ENCODE measurements at regions of chr12 and their contacts with region 1.

Region 1: GRCh38 chr12:57583008-57583831 is 7.8 kb upstream of the PIP4K2C start:
- DNase-seq: peak; percentile 79
- H3K4me3 Mint-ChIP-seq: no peak overlapping the region
- H3K27ac Mint-ChIP-seq: no peak overlapping the region
- H3K4me1 Mint-ChIP-seq: no peaks in the 10 kb centered on the region
- H3K27me3 Mint-ChIP-seq: no peaks in the 10 kb centered on the region
- CTCF ChIP-seq: peak; percentile 82

Region 2: DNA sequence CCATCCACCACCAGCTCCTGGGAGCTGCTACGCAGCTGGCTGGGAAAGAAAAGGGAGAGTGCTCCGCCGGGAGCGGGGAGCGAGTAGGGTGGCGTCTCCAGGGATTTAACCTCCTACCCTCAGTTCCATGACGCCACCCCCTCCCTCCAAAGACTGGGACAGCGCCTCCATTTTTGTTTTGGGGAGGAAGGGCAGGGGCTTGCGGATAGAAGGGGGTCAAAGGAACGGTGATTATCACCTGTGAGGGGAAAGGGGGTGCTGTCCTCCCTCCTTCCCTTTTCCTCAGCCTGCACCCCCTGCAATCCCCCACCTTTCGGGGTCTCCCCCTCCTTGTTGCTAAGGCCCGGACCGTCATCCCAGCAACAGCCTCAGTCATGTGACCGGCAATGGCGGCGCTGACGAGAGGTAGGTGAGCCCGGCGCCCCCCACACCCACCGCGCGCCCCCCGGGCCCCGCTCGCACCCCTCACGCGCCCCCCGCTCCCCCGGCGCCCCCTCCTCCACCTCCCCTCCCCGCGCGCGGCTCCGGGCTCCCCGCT is 21.3 kb after region 1 on chr12 and contains the start of gene DTX3:
- CTCF ChIA-PET with region 1: interaction called, 30 read pairs
- POLR2A ChIA-PET with region 1: interaction called, 3 read pairs
- intact Hi-C with region 1: no loop called
- DNase-seq: no peak
- H3K4me3 Mint-ChIP-seq: peak within 1 kb of the TSS; percentile 64
- H3K27ac Mint-ChIP-seq: no peak within 1 kb of the TSS
- H3K4me1 Mint-ChIP-seq: peaks cover 13% of the 10 kb centered on the region
- H3K27me3 Mint-ChIP-seq: no peaks in the 10 kb centered on the region
- CTCF ChIP-seq: no peak
- total RNA-seq, gene DTX3: 1.7 and 2.0 TPM in 2 replicates

Region 3: DNA sequence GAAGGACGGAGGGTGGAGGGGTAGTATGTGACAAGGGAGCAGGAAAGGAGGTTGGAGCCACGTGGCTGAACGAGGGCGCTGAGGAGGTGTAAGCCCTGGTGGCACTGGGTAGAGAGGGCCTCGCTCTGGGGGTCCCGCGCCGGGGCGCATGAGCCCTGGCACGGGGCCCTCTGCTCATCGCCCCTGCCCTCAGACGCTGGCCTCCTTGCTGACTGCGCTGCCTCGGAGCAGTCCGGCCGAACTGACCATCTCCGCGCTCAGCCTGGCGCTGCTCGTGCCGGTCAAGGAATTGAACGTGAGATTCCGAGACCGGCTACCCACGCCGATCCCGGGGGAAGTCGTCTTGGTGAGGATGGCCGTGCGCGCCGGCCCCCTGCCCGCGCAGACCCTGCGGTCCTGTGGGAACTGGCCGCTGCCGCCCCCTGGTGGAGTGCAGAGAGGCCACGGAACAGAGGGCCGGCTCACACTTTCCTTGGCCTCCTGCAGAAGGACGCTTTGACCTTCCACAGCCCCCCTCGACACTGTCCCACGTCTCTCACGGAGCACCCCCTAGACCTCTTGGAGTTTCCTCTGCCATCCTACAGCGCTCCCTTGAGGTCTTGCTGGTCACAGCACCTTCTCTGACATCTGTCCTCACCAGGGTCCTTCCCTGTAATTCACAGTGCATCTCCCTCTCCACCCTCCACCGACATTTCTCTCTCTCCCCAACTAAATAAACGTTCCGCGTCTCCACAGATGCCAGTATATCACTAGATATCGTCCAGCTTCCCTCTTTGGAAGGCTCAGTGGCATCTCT is 38.5 kb after region 1 on chr12:
- CTCF ChIA-PET with region 1: interaction called, 72 read pairs
- POLR2A ChIA-PET with region 1: interaction called, 3 read pairs
- intact Hi-C with region 1: loop called (anchors 1 kb)
- DNase-seq: peak; percentile 35
- H3K4me3 Mint-ChIP-seq: peak overlapping the region; percentile 47
- H3K27ac Mint-ChIP-seq: no peak overlapping the region
- H3K4me1 Mint-ChIP-seq: peaks cover 5% of the 10 kb centered on the region
- H3K27me3 Mint-ChIP-seq: peaks cover 69% of the 10 kb centered on the region
- CTCF ChIP-seq: peak; percentile 90

Region 4: GRCh38 chr12:57632694-57633477 is 49.7 kb after region 1 on chr12 and contains the start of gene B4GALNT1:
- CTCF ChIA-PET with region 1: interaction called, 26 read pairs
- POLR2A ChIA-PET with region 1: no interaction called
- intact Hi-C with region 1: no loop called
- DNase-seq: peak; percentile 58
- H3K4me3 Mint-ChIP-seq: peak within 1 kb of the TSS; percentile 52
- H3K27ac Mint-ChIP-seq: no peak within 1 kb of the TSS
- H3K4me1 Mint-ChIP-seq: peaks cover 5% of the 10 kb centered on the region
- H3K27me3 Mint-ChIP-seq: no peaks in the 10 kb centered on the region
- CTCF ChIP-seq: peak; percentile 84
- total RNA-seq, gene B4GALNT1: 0.29 and 0.40 TPM in 2 replicates

Region 5: GRCh38 chr12:57726151-57726883 is 143.1 kb after region 1 on chr12:
- CTCF ChIA-PET with region 1: interaction called, 17 read pairs
- POLR2A ChIA-PET with region 1: interaction called, 7 read pairs
- intact Hi-C with region 1: no loop called
- DNase-seq: peak; percentile 87
- H3K4me3 Mint-ChIP-seq: peak overlapping the region; percentile 82
- H3K27ac Mint-ChIP-seq: peak overlapping the region; percentile 83
- H3K4me1 Mint-ChIP-seq: no peaks in the 10 kb centered on the region
- H3K27me3 Mint-ChIP-seq: no peaks in the 10 kb centered on the region
- CTCF ChIP-seq: peak; percentile 84